ENCODE measurements at regions of chr19 and their contacts with region 1.

Region 1: DNA sequence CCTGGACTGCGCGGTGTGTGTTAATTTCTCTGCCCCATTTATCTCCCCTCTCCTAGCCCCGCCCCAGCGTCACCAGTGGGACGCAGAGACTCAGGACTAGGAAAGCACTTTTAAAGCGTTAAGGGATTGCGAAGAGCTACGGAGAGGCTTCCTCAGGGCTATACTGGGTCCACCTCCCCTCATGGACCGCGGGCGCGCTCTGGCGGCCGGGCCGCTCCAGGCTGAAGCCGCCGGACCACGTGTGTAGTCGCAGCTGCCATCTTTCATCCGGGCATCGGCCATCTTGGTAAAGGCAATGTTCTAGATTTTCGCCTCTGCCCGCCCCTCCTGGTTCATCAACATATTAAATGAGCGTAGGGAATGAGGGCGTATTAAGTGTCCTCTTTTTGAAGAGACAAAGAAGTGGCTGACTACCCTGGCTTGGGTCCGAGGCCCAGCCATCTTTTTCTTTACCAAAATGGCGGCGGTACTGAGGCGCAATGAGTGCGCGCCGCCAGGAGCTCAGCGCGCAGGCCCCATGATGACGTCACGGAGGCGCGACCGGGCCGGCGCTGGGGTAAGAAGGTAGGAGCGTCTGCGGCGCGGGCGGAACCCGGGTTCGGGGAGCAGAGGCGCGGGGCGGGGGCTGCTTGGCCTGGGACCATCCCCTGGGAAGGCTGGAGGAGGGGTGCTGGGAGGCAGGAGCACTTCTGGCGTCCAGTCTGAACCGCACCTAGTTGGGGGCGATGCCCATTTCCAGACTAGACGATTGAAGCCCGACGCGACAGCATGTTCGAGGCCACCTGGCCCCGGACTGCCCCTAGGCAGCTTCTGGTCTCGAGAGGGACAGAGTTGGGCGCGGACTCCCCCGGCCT is at the start of gene CCDC124:
- DNase-seq: peak; percentile 83 to 96 (median 89)
- ATAC-seq: peak; percentile 96 to 97 (median 96)
- H3K4me3 ChIP-seq: peak within 1 kb of the TSS; percentile 76 to 90
- H3K4me3 Mint-ChIP-seq: peak within 1 kb of the TSS; percentile 82 to 88 (median 84)
- H3K27ac ChIP-seq: peak within 1 kb of the TSS; percentile 94
- H3K27ac Mint-ChIP-seq: peak within 1 kb of the TSS; percentile 93 to 94
- H3K4me1 ChIP-seq: peaks cover 6 to 23% of the 10 kb centered on the region in 2 experiments
- H3K4me1 Mint-ChIP-seq: peaks cover 11 to 20% (median 14%) of the 10 kb centered on the region in 3 donors
- H3K27me3 ChIP-seq: peaks cover 0 to 4% of the 10 kb centered on the region in 2 experiments
- H3K27me3 Mint-ChIP-seq: no peaks in the 10 kb centered on the region
- total RNA-seq, gene CCDC124: 24.8 to 51.1 (median 41.5) TPM

Region 2: GRCh38 chr19:17687857-17688784 is 244.6 kb before region 1 on chr19 and contains the start of gene UNC13A:
- CTCF ChIA-PET with region 1: no interaction called
- POLR2A ChIA-PET with region 1: no interaction called
- DNase-seq: peak in 33 of 35 experiments; percentile 12 to 63 (median 41)
- ATAC-seq: peak; percentile 53 to 86 (median 65)
- H3K4me3 ChIP-seq: no peak within 1 kb of the TSS
- H3K4me3 Mint-ChIP-seq: peak within 1 kb of the TSS in 2 of 3 donors; percentile 25 to 56
- H3K27ac ChIP-seq: no peak within 1 kb of the TSS
- H3K27ac Mint-ChIP-seq: peak within 1 kb of the TSS in 1 of 2 donors; percentile 40
- H3K4me1 ChIP-seq: peaks cover 0 to 28% of the 10 kb centered on the region in 2 experiments
- H3K4me1 Mint-ChIP-seq: peaks cover 13 to 22% (median 14%) of the 10 kb centered on the region in 3 donors
- H3K27me3 ChIP-seq: peaks cover 17 to 79% of the 10 kb centered on the region in 2 experiments
- H3K27me3 Mint-ChIP-seq: peaks cover 51 to 74% of the 10 kb centered on the region in 2 donors
- total RNA-seq, gene UNC13A: 0.07 to 0.18 (median 0.13) TPM in 4 of 5 donors, not detected in the other

Region 3: DNA sequence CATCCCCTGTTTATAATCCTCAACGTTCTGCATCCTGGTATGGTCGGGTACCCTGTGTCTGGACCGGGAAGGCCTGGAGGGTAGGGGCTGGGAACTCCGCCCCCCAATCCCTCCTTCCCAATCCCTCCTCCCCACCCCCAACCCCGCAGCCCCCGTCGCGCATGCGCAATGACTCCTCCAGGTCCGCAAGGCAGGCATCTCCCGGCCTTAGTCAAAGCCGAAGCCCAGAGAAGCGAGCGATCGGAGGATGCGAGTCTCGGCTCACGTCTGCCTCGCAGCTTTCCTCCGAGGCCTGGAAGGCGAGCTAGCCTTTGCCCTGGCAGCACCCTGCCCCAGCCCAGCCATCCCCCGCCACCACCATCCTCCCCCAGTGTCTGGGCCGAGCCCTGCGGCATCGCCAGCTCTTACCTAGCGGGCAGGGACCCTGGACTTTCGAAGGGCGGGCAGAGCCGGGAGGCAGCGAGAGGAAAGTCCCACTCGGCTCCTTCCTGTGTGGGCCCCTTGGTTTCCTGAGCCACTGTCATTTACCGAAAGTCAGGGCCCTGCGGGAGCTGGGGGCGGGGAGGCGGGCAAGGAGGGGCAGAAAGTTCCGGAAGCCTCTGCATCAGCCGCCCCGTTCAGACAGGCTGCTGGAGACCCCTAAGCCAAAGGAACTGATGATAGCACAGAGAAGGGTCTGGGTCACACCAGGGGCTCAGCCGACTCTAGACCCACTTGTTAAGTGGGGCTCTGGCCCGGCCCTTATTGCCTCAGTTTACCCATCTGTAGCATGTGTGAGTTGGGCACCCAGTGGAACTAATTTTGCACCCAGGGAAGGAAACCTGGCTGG is 85.0 kb before region 1 on chr19 and contains the start of gene JAK3:
- CTCF ChIA-PET with region 1: interaction called in 1 of 2 experiments, 10 read pairs
- POLR2A ChIA-PET with region 1: no interaction called
- DNase-seq: peak; percentile 67 to 92 (median 87)
- ATAC-seq: peak; percentile 82 to 90 (median 82)
- H3K4me3 ChIP-seq: peak within 1 kb of the TSS; percentile 68 to 73
- H3K4me3 Mint-ChIP-seq: peak within 1 kb of the TSS; percentile 83 to 93 (median 93)
- H3K27ac ChIP-seq: peak within 1 kb of the TSS; percentile 95
- H3K27ac Mint-ChIP-seq: peak within 1 kb of the TSS; percentile 92 to 99
- H3K4me1 ChIP-seq: peaks cover 27 to 85% of the 10 kb centered on the region in 2 experiments
- H3K4me1 Mint-ChIP-seq: peaks cover 70 to 76% (median 75%) of the 10 kb centered on the region in 3 donors
- H3K27me3 ChIP-seq: no peaks in the 10 kb centered on the region
- H3K27me3 Mint-ChIP-seq: no peaks in the 10 kb centered on the region
- total RNA-seq, gene JAK3: 120 to 224 (median 127) TPM

Region 4: DNA sequence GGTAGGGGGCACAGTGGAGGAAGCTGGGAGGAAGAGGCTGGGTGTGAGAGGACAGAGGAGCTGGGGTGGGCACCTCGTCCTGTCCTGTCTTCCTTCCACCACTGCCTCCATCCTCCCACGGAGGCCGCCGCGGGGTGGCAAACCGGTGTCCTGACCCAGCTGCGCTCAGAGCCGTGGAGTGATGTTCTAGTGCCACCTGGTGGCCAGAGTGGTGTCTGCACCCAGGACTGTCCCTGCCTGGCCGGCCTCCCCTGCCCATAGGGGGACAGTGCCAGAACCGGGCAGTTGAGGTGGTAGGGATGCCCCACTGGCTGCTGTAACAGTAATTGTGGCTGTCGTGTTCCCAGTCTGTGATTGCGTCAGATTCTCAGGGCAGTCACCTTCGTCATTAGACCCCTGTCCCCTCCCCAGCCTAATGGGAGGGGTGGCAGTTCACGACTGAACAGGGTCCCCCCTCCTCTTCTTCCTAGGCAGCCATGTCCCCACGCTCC is 64.2 kb after region 1 on chr19:
- CTCF ChIA-PET with region 1: interaction called, 24 to 43 read pairs
- POLR2A ChIA-PET with region 1: interaction called, 6 to 7 read pairs
- DNase-seq: peak; percentile 57 to 92 (median 80)
- ATAC-seq: peak; percentile 21 to 40 (median 30)
- H3K4me3 ChIP-seq: no peak overlapping the region
- H3K4me3 Mint-ChIP-seq: no peak overlapping the region
- H3K27ac ChIP-seq: no peak overlapping the region
- H3K27ac Mint-ChIP-seq: no peak overlapping the region
- H3K4me1 ChIP-seq: peaks cover under 1 to 31% of the 10 kb centered on the region in 2 experiments
- H3K4me1 Mint-ChIP-seq: peaks cover 16 to 25% (median 24%) of the 10 kb centered on the region in 3 donors
- H3K27me3 ChIP-seq: peaks cover 0 to 15% of the 10 kb centered on the region in 2 experiments
- H3K27me3 Mint-ChIP-seq: no peaks in the 10 kb centered on the region